Heart right ventricle (tissue), 16 donors: ENCODE measurements at regions of chr2 and their contacts with region 1.

Region 1: DNA sequence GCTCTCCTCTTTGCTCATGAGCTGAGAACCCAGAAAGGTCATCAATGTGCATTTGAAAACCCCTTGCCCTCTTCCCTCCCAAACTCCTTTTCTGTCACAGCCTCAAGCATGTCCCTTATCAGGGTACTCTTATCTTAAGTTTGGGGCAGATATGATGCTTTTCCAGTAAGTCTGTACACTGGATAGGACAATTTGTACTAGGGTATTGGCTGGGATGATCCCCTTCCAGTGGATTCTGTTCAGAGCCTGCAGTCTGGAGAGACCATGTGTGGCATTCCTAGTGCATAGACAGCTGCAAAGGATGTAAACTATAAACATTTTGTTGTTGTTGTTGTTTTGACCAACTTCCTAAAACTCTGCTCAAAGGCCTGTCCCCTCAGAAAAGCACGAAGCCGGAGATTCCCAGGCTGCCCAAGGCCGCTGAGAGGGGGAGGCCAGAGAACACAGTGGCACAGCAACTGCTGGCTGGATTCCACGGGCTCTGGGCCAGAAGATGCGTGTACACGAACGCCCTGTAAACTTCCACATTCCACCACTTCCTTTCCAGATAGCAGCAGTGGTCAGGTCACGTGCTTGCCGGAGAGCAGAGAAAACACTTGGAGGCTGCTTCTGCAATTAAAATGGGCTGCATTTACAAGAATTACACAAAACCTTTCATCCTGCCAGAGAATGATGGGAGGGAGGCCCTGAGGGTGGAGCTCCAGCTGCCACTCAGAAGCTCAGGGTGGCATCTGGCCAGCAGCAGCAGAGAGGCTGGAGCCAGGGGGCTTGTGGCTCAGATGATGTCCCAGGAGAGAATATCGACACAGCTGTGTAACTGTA is 42.1 kb downstream of the BMP10 start:
- DNase-seq: peak; percentile 94 to 96
- ATAC-seq: peak; percentile 81 to 92 (median 85)
- H3K4me3 ChIP-seq: peak overlapping the region in 5 of 10 donors; percentile 21 to 28 (median 24)
- H3K27ac ChIP-seq: peak overlapping the region; percentile 38 to 85 (median 76)
- H3K4me1 ChIP-seq: peaks cover 20 to 83% (median 47%) of the 10 kb centered on the region in 9 donors
- H3K27me3 ChIP-seq: no peaks in the 10 kb centered on the region
- CTCF ChIP-seq: no peak

Region 2: GRCh38 chr2:68467077-68467960 is 361.8 kb before region 1 on chr2 and contains the starts of genes APLF and FBXO48:
- intact Hi-C with region 1: loop called in 1 of 10 experiments (anchors 10 kb)
- DNase-seq: peak; percentile 94 to 99
- ATAC-seq: peak; percentile 97 to 99 (median 99)
- H3K4me3 ChIP-seq: peak within 1 kb of the TSS; percentile 66 to 95 (median 78)
- H3K27ac ChIP-seq: peak within 1 kb of the TSS; percentile 2 to 94 (median 84)
- H3K4me1 ChIP-seq: peaks cover 0 to 34% (median 17%) of the 10 kb centered on the region in 9 donors
- H3K27me3 ChIP-seq: no peaks in the 10 kb centered on the region
- CTCF ChIP-seq: no peak
- total RNA-seq, gene APLF: 3.4 to 6.5 (median 5.1) TPM
- total RNA-seq, gene FBXO48: 0.27 to 1.2 (median 0.97) TPM

Region 3: DNA sequence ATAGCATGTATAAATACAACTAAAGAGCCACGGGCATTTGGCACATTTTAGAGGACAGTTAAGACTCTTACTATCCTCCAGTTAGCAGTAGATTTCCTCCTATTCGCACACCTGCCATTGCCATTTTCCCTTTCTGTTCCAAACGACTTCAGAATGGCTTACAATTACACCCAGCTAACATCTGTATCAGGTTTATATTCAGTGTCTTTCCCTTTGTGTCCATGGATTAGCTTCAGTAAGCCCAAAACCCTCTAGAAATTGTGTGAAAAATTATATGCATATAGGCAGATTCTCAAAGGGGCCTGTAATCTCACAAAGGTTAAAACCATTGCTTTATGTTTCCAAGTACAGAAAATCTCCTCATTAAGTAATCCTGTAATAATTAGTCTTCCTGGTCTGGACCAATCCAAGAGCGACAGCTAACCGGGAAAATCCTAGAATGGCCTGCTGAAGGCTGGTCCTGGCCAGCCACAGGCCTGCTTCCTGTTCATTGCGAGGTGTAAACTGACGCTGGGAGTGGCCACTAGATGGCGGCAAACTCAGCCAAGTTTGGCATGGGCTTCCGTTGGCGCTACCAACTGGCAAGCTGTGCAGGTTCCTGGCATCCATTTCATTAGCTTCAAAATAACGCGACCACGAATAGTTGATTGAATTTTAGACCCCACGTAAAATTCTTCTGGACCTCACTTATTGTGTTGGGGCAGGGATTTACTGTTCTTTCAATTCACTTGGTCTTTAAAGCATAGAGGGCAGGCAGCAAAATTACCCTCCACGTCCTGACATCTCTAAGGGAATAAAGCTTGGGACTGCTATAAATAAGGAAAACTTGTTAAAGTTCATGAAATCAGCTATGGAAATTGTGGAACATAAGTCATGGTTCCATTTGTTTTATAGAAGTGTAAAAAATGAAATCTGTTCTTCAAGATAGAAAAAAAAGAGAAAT is 77.4 kb before region 1 on chr2:
- intact Hi-C with region 1: loop called in 2 of 10 experiments (anchors 2 to 10 kb)
- DNase-seq: peak; percentile 88 to 92
- ATAC-seq: peak; percentile 92 to 97 (median 94)
- H3K4me3 ChIP-seq: peak overlapping the region in 3 of 10 donors; percentile 23 to 32 (median 30)
- H3K27ac ChIP-seq: peak overlapping the region in 4 of 10 donors; percentile 0 to 45 (median 16)
- H3K4me1 ChIP-seq: peaks cover 0 to 80% (median 25%) of the 10 kb centered on the region in 9 donors
- H3K27me3 ChIP-seq: no peaks in the 10 kb centered on the region
- CTCF ChIP-seq: peak; percentile 82 to 98 (median 94)

Region 4: DNA sequence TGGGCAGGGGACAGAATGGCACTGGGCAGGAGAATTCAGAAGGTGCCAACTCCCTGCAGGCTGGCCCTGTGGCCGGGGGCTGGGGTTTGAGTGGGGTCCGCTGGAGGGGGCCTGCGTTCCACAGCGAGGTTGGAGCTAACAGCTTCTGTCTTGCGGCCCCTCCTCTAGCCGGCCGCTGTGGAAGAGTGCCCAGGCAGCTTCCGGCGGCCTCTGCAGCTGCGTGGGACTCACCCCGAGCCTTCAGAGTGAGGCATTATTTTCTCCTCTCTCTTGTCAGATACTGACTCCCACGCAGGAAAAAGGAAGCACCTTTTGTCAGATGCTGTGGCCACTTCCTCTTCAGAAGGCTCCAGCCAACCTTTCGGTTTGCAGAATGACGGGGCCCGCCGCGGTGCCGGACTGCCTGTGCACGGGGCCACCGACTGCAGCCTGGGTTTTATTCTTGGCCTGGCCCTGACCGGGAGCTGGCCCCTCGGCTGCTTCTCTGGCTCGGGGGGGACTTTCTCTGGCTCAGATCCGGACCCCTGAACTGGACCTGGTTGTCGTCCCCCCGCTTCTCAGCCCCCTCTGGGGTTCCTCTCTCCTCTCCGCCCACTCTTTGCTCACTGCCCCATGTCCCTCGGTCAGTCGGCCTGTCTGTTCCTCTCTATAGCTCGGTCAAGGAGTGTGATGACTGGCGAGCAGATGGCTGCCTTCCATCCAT is 54.4 kb before region 1 on chr2:
- intact Hi-C with region 1: loop called in 6 of 10 experiments (anchors 2 to 5 kb)
- DNase-seq: peak; percentile 70 to 84
- ATAC-seq: peak; percentile 84 to 91 (median 88)
- H3K4me3 ChIP-seq: peak overlapping the region; percentile 14 to 66 (median 55)
- H3K27ac ChIP-seq: peak overlapping the region; percentile 69 to 94 (median 86)
- H3K4me1 ChIP-seq: peaks cover 5 to 90% (median 68%) of the 10 kb centered on the region in 9 donors
- H3K27me3 ChIP-seq: no peaks in the 10 kb centered on the region
- CTCF ChIP-seq: peak in 1 of 9 donors; percentile 5

Region 5: GRCh38 chr2:70525032-70525431 is 1695.9 kb after region 1 on chr2:
- intact Hi-C with region 1: loop called in 1 of 10 experiments (anchors 5 kb)
- DNase-seq: no peak
- ATAC-seq: no peak
- H3K4me3 ChIP-seq: no peak overlapping the region
- H3K27ac ChIP-seq: peak overlapping the region in 2 of 10 donors; percentile 48 to 82
- H3K4me1 ChIP-seq: peaks cover 0 to 39% (median 9%) of the 10 kb centered on the region in 9 donors
- H3K27me3 ChIP-seq: no peaks in the 10 kb centered on the region
- CTCF ChIP-seq: no peak